ENCODE measurements at regions of chr16 and their contacts with region 1.

Region 1: GRCh38 chr16:31117391-31118197 is at the start of gene KAT8:
- DNase-seq: peak; percentile 93 to 99 (median 98)
- ATAC-seq: peak; percentile 92
- H3K4me3 Mint-ChIP-seq: peak within 1 kb of the TSS; percentile 83 to 93 (median 88)
- H3K27ac Mint-ChIP-seq: peak within 1 kb of the TSS; percentile 68 to 97 (median 94)
- H3K4me1 Mint-ChIP-seq: peaks cover 18 to 38% (median 24%) of the 10 kb centered on the region in 4 donors
- H3K27me3 Mint-ChIP-seq: no peaks in the 10 kb centered on the region
- polyA plus RNA-seq, gene KAT8: 58.0 to 90.5 (median 67.4) TPM

Region 2: DNA sequence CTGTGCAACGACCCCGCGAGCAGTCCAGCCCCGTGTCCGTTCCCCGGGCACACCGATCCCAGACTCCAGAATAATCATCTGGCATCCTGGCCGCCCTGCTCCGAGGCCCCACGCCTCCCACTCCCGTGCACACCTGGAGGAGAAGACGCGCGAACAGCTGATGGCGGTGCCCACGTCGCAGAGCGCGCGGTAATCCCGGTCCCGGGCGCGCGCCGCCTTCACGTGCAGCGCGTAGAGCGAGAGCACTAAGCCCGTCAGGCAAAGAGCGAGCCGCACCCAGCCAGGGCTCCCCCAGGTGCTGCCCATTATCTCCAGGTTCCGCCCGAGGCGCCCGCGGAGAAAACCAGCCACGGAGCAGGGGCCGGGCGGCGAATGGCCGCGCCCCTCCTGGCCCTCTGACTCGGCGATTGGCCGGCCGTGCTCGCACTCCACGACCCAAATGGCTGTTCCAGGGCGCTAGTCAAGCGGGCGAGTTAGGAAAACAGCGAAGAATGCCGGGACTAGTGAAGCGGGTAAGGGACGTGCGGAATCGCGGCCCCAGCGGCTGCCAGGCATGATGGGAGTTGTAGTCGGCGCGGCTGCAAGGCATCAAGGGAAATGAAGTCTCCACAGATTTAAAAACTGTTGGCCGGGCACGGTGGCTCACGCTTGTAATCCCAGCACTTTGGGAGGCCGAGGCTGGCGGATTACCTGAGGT is 23.0 kb before region 1 on chr16 and contains the start of gene VKORC1:
- POLR2A ChIA-PET with region 1: interaction called, 17 read pairs
- DNase-seq: peak; percentile 68 to 89 (median 82)
- ATAC-seq: peak; percentile 91 to 95
- H3K4me3 Mint-ChIP-seq: peak within 1 kb of the TSS; percentile 89 to 98 (median 92)
- H3K27ac Mint-ChIP-seq: peak within 1 kb of the TSS; percentile 63 to 96 (median 92)
- H3K4me1 Mint-ChIP-seq: peaks cover 13 to 36% (median 32%) of the 10 kb centered on the region in 4 donors
- H3K27me3 Mint-ChIP-seq: no peaks in the 10 kb centered on the region
- polyA plus RNA-seq, gene VKORC1: 98.2 to 109 (median 99.1) TPM

Region 3: GRCh38 chr16:31134625-31135547 is 17.3 kb after region 1 on chr16:
- POLR2A ChIA-PET with region 1: interaction called, 10 read pairs
- DNase-seq: no peak
- ATAC-seq: no peak
- H3K4me3 Mint-ChIP-seq: no peak overlapping the region
- H3K27ac Mint-ChIP-seq: peak overlapping the region in 1 of 10 donors; percentile 84
- H3K4me1 Mint-ChIP-seq: peaks cover 0 to 8% (median 0%) of the 10 kb centered on the region in 4 donors
- H3K27me3 Mint-ChIP-seq: no peaks in the 10 kb centered on the region

Region 4: DNA sequence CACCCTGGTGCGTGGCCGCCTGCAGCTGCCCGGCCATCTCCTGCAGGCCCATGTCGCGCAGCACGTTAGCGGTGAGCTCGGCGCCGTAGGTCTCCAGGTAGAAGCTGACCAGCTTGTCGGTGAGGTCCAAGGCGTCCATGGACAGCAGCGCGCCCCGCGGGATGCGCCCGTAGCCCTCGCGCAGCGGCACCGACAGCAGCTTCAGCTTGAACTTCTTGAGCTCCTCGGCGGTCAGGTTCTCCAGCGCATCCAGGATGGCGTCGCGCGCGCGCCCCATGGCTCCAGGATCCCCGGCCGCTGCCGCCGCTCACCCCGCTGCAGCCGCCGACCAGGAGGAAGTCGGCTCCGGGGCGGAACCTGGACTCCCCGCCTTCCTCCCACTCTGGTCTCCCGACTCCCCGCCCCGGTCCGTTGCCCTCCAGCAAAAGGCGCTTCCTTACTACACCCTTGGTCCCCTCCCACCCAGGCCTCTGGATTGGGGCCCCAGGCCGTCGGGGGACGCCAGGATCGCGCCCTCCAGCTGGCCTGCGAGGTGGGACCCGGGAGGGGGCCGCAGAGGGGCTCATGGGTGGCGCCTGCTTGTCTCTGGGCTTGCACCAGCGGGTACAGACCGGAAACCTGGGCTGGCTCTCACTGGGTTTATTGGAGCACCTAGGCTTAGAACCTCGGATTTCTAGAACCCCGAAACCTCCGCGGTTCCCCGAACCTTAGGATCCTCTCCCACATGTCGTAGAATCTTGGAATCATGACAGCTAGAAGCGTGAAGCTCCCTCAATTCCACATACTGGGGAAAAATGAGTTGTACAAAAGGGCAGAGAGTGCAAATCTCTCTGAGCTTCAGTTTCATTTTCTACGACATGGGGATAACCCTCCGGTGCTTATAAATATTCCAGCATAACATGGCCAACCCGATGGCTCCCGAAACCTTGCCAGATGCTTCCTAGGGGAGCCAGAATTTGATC is 85.1 kb after region 1 on chr16 and contains the start of gene PYCARD:
- POLR2A ChIA-PET with region 1: interaction called, 12 read pairs
- DNase-seq: peak in 4 of 10 donors; percentile 18 to 55 (median 40)
- ATAC-seq: peak; percentile 41 to 45
- H3K4me3 Mint-ChIP-seq: peak within 1 kb of the TSS; percentile 85 to 93 (median 89)
- H3K27ac Mint-ChIP-seq: peak within 1 kb of the TSS; percentile 80 to 91 (median 88)
- H3K4me1 Mint-ChIP-seq: peaks cover 30 to 56% (median 54%) of the 10 kb centered on the region in 4 donors
- H3K27me3 Mint-ChIP-seq: no peaks in the 10 kb centered on the region
- polyA plus RNA-seq, gene PYCARD: 39.3 to 65.2 (median 39.7) TPM

Region 5: DNA sequence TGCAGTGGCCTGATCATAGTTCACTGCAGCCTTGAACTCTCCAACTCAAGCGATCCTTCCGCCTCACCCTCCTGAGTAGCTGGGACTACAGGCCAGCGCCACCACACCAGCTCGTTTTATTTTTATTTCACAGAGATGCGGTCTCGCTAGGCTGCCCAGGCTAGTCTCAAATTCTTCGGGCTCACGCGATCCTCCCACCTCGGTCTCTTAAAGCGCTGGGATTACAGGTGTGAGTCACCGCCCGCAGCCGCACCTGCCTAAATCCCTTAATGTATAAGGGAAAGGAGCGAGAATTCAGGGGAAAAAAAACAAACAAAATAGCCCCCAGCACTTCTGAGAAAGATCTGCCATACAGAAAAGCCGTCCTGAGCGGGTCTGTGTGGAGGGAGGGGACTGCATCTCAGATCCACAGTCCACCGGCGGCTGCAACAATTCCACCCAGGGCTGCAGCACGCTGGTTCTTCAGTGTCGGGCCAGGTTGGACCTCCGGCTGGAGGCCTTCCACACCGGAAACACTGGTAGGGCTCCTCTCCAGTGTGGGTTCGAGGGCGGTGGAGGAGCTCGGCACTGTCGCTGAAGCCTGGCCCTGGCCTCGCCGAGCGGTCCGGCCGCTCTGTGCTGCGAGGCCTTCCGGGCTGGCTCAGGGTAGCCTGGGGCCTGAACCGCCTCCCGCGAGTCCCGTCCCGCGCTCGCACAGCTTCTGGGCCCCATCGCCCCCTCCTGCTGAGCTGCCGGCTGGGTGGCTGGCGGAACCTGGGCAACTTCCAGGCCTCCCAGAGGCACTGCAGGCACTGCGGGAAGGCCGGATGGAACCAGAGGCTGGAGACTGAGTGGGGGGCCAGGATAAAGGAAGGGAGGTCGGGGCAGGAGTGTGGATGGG is 318.0 kb after region 1 on chr16:
- POLR2A ChIA-PET with region 1: no interaction called
- DNase-seq: no peak
- ATAC-seq: no peak
- H3K4me3 Mint-ChIP-seq: no peak overlapping the region
- H3K27ac Mint-ChIP-seq: no peak overlapping the region
- H3K4me1 Mint-ChIP-seq: peaks cover 0 to 14% (median 3%) of the 10 kb centered on the region in 4 donors
- H3K27me3 Mint-ChIP-seq: no peaks in the 10 kb centered on the region

Measured in naive thymus-derived CD8-positive, alpha-beta T cell (primary cell).